Activated T-helper 1 cell treated with anti-CD3 and anti-CD28 coated beads, Interleukin-12 subunit alpha, Interleukin-12 subunit beta, Interleukin-2, Interleukin-4 antibody, amounts not matched to agents 30 ng/mL and 10 ng/mL and 1 ng/mL, durations not matched to agents 14 hours and 24 hours and 36 hours (primary cell): ENCODE measurements at regions of chr9 and their contacts with region 1.

Region 1: DNA sequence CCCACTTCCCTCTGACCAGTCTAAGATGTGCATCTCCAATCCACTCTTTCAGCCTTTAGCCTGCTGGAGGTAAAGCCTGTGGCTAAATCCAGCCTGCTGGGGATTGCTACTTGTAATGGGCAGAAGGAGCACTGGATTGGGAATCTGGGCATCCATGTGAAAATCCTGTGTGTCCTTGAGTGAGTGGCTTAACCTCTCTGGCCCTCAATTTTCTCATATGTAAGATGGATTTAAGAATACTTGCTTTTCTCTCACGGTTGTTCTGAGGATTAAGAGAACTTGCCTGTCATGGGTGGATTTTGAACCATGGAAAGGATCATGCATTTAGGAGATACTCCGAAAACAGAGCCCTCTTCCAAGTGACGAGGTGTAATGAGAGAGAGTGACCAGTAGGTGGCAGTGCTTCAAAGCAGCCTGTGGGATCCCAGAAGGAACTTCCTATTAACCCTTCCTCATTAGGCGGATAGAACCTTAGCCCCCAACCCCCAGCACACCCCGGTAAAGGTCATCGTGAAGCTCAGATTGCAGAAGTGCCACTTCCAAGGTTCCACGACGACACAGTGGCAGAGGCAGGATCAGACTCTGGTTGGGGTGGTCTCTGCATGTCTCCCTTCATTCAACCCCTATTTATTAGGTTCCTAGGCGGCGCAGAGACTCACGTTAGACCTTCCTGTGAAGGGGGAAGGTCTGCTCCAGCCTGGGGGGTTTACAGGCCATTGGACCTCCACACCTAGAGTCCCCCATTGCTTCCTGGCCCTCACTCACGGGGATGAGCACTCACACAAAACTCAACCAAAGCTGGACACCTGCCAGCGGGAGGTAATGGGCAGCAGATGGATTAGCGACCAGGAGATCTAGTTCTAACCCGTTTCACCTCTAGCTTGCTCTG is 68.7 kb upstream of the ZNF618 start:
- DNase-seq: no peak
- H3K4me3 Mint-ChIP-seq: no peak overlapping the region
- H3K27ac Mint-ChIP-seq: no peak overlapping the region
- H3K4me1 Mint-ChIP-seq: no peaks in the 10 kb centered on the region
- H3K27me3 Mint-ChIP-seq: peaks cover 7% of the 10 kb centered on the region

Region 2: GRCh38 chr9:113876151-113876992 is 69.0 kb after region 1 on chr9 and contains the start of gene ZNF618:
- intact Hi-C with region 1: loop called (anchors 1 kb)
- DNase-seq: no peak
- H3K4me3 Mint-ChIP-seq: peak within 1 kb of the TSS; percentile 92
- H3K27ac Mint-ChIP-seq: peak within 1 kb of the TSS; percentile 20
- H3K4me1 Mint-ChIP-seq: no peaks in the 10 kb centered on the region
- H3K27me3 Mint-ChIP-seq: peaks cover 40% of the 10 kb centered on the region
- total RNA-seq, gene ZNF618: 0.07 and 0.16 TPM in 2 replicates

Region 3: GRCh38 chr9:113929634-113930389 is 122.4 kb after region 1 on chr9:
- intact Hi-C with region 1: no loop called
- DNase-seq: no peak
- H3K4me3 Mint-ChIP-seq: no peak overlapping the region
- H3K27ac Mint-ChIP-seq: no peak overlapping the region
- H3K4me1 Mint-ChIP-seq: no peaks in the 10 kb centered on the region
- H3K27me3 Mint-ChIP-seq: peaks cover 5% of the 10 kb centered on the region

Region 4: GRCh38 chr9:113963017-113963620 is 155.7 kb after region 1 on chr9:
- intact Hi-C with region 1: loop called (anchors 1 kb)
- DNase-seq: no peak
- H3K4me3 Mint-ChIP-seq: no peak overlapping the region
- H3K27ac Mint-ChIP-seq: no peak overlapping the region
- H3K4me1 Mint-ChIP-seq: no peaks in the 10 kb centered on the region
- H3K27me3 Mint-ChIP-seq: no peaks in the 10 kb centered on the region

Region 5: DNA sequence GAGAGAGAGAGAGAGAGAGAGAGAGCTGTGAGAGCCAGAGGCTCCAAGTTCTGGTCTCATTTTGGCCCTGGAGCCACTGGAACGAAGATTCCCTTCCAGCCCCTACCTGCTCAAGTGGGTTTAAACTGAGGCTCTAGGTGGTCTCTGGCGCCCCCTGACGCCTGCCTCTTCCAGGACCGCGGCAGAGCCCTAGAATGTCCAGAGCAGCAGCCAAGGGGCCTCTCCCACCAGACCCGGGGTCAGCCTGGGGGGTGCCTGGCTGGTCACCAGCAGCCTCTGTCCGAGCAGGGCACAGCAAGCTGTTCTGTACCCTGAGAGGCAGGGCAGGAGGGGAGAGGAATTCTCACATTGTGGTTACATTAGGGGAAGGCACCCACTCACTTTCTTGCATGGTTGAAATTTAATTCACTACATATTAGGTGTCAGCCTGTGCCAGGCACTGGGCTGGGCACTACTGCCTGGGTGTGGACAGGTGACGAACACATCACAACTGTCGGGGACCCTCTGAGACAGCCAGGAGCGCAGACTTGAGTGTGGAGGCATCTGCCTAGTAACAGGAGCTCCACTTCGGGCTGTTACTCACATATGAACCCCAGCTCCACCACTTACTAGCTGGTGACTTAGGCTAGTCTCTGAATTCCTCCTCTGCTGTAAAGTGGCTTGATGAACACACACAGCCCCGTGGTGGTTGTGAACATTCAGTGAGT is 226.1 kb after region 1 on chr9:
- intact Hi-C with region 1: loop called (anchors 5 kb)
- DNase-seq: no peak
- H3K4me3 Mint-ChIP-seq: no peak overlapping the region
- H3K27ac Mint-ChIP-seq: no peak overlapping the region
- H3K4me1 Mint-ChIP-seq: no peaks in the 10 kb centered on the region
- H3K27me3 Mint-ChIP-seq: peaks cover 2% of the 10 kb centered on the region